ENCODE measurements at regions of chr1 and their contacts with region 1.

Region 1: GRCh38 chr1:177170756-177171535 is at the start of gene BRINP2:
- DNase-seq: no peak
- CTCF ChIP-seq: no peak

Region 2: DNA sequence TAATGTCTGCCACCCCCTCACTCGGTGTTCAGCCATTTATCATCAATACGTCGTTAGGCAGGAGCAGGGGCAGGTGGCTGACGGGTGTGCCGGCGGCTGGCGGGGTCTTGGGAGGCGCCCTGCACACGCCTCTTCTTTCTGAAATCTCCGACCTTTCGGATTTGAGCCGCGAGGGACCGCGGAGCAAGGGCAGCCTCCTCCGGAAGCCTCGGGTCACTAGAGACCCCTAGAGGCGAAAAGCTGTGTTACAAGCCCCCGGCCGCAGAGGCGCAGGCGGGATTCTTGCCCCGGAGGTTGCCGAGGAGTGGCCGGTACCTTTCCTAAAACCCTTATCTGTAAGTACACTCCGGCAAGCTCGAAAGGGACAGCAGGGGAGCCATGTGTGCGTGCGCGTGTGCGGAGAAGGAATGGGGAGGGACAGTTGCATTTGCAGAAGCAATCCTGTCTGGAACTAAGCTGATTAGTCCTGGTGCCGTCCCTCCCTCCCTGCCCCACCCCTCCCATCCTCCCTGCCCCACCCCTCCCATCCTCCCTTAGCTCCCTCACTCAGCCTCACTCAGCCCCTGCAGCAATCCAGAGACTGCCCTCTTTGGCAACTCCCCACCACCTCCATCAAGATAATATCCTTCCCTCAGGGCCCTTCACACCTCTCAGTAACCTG is 10.8 kb after region 1 on chr1:
- CTCF ChIA-PET with region 1: interaction called, 21 read pairs
- POLR2A ChIA-PET with region 1: no interaction called
- DNase-seq: peak; percentile 81
- CTCF ChIP-seq: peak; percentile 63